ENCODE measurements at regions of chr1 and their contacts with region 1.

Region 1: DNA sequence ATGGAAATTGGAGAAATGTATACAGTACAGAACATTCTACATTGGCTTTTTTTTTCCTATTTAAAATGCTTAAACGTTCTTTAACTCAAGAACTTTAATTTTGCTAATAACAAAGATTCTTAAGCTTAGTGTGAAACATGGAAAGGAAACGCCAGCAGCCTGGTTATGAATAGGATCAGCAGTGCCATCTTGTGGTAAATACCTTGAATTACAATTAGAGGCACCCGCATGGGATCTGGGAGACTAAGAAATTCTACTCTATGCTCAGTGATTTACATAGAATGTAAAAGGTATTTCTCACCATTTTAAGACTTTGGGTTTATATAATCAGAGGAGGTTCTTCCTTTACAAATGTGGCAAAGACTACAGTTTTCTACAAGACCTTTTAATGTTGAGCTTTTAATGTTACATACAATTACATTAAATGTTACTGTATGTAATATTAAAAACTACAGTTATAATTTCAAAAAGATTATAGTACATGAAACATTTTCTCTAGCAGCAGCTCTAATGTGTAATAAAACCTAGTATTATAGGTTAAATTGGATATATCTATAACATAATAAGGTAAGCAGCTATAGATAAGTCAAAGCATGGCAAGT is 32.1 kb upstream of the APOBEC4 start:
- DNase-seq: peak; percentile 45
- ATAC-seq: peak; percentile 74
- H3K4me3 Mint-ChIP-seq: no peak overlapping the region
- H3K27ac Mint-ChIP-seq: no peak overlapping the region
- H3K4me1 Mint-ChIP-seq: peaks cover 10% of the 10 kb centered on the region
- H3K27me3 Mint-ChIP-seq: peaks cover 6% of the 10 kb centered on the region
- CTCF ChIP-seq: peak; percentile 78

Region 2: DNA sequence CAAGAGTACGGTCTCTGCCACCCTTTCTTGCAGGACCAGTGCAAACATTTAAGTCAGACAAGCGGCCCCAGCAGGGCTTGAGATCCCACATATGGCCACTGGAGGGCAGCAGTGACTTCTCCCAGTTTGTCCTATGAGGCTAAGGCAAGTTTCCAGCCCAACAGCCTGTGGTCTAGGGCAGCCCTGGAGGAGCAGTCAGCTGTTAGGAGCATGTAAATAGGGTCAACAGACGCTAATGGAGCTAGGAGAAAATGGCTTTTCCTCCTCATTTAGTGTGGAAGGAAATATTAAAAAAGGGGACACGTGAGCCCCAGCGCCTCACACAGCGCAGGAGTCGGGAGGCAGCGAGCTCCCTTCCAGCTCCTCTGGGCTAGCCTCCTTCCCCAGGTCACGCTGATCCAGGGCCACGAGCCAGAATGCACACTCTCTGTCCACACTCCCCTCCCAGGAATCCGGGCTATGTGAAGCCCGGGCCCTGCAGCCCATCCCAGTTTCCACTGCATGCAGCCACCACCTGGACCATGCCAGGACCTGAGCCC is 403.6 kb before region 1 on chr1:
- CTCF ChIA-PET with region 1: interaction called, 8 read pairs
- POLR2A ChIA-PET with region 1: no interaction called
- intact Hi-C with region 1: loop called (anchors 10 kb)
- DNase-seq: peak; percentile 87
- ATAC-seq: peak; percentile 89
- H3K4me3 Mint-ChIP-seq: no peak overlapping the region
- H3K27ac Mint-ChIP-seq: no peak overlapping the region
- H3K4me1 Mint-ChIP-seq: no peaks in the 10 kb centered on the region
- H3K27me3 Mint-ChIP-seq: peaks cover 8% of the 10 kb centered on the region
- CTCF ChIP-seq: peak; percentile 88

Region 3: GRCh38 chr1:183628537-183628936 is 56.7 kb before region 1 on chr1:
- CTCF ChIA-PET with region 1: interaction called, 14 read pairs
- POLR2A ChIA-PET with region 1: no interaction called
- intact Hi-C with region 1: no loop called
- DNase-seq: no peak
- ATAC-seq: peak; percentile 46
- H3K4me3 Mint-ChIP-seq: no peak overlapping the region
- H3K27ac Mint-ChIP-seq: peak overlapping the region; percentile 69
- H3K4me1 Mint-ChIP-seq: peaks cover 55% of the 10 kb centered on the region
- H3K27me3 Mint-ChIP-seq: no peaks in the 10 kb centered on the region
- CTCF ChIP-seq: no peak

Region 4: DNA sequence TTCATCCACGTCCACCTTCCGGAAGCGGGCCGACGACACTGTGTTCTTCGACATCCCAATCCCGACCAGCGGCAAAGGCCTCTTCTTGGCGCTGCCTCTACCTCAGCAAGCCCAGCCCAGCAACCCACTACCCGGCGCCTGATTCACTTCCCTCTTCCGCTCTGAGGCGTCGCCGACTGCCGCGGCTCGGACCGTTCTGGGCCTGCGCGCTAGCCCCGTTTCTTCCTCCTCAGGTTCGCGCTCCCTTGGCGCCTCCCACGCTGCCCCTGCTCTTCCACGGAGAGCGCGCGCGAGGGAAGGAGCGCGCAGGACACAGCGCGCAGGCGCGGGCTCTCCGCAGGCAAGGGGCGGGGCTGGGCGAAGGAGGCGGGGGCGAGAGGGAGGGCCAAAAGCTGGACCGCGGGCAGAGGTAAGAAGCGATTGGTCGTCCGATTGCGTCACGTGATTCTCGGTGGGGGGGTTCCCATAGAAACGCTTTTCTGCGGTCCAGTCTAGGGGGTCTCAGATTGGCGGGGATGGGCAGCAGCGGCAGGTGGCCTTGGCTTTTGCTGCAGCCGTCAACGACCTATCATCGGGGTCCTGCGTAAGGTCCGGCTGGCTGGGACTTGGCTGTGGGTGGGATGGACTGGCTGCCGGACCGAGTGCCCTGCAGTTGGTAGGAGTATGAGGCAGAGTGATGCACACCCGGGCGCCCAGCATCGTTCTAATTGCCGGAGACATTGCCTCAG is 49.4 kb before region 1 on chr1 and contains the start of gene ARPC5:
- CTCF ChIA-PET with region 1: interaction called, 13 read pairs
- POLR2A ChIA-PET with region 1: no interaction called
- intact Hi-C with region 1: no loop called
- DNase-seq: peak; percentile 95
- ATAC-seq: peak; percentile 89
- H3K4me3 Mint-ChIP-seq: peak within 1 kb of the TSS; percentile 89
- H3K27ac Mint-ChIP-seq: peak within 1 kb of the TSS; percentile 98
- H3K4me1 Mint-ChIP-seq: peaks cover 38% of the 10 kb centered on the region
- H3K27me3 Mint-ChIP-seq: no peaks in the 10 kb centered on the region
- CTCF ChIP-seq: no peak
- total RNA-seq, gene ARPC5: 128 to 134 TPM

Region 5: GRCh38 chr1:183670178-183670577 is 15.0 kb before region 1 on chr1:
- CTCF ChIA-PET with region 1: interaction called, 14 read pairs
- POLR2A ChIA-PET with region 1: no interaction called
- intact Hi-C with region 1: no loop called
- DNase-seq: no peak
- ATAC-seq: no peak
- H3K4me3 Mint-ChIP-seq: no peak overlapping the region
- H3K27ac Mint-ChIP-seq: no peak overlapping the region
- H3K4me1 Mint-ChIP-seq: no peaks in the 10 kb centered on the region
- H3K27me3 Mint-ChIP-seq: peaks cover 1% of the 10 kb centered on the region
- CTCF ChIP-seq: no peak

Region 6: DNA sequence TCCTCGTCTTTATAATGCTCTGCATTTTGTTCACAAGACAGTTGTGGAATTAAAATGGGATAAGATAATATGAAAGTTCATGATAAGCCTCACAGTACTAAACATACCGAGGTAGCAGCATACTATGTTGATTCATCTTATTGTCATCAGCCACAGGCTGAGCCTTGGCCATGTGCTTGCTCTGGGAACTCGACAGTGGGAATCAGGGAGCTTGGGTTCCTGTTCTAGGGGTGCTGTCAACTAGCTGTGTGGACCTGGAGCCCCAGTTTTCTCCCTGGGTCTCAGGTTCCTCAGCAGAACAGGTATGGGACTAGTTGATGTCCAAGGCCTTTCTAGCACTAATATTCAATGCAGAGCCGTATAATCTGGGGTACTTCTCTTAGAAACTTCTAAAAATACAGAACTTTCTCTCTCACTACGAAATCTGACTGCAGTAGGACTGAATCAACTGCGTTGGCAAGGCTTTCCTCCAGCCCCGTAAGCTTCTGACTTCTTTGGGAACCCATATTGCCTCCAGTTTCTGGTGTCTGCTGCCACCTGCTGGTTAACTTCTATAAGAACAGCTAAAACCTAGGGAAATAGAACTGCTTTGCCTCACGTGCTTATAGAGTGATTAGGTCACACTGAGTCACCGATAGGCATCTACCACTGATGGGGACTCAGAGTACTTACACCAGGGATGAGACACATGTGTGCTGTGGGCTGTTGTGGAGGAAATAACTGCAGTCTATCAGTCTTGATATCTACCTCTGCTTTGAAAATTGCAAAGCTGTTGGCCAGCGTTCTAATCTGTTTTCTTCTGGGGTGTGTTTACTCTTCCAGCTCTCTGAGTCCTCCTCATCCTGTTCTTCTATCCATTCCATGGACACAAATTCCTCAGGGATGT is 230.7 kb after region 1 on chr1:
- CTCF ChIA-PET with region 1: interaction called, 36 read pairs
- POLR2A ChIA-PET with region 1: interaction called, 3 read pairs
- intact Hi-C with region 1: no loop called
- DNase-seq: peak; percentile 79
- ATAC-seq: peak; percentile 99
- H3K4me3 Mint-ChIP-seq: no peak overlapping the region
- H3K27ac Mint-ChIP-seq: no peak overlapping the region
- H3K4me1 Mint-ChIP-seq: peaks cover 24% of the 10 kb centered on the region
- H3K27me3 Mint-ChIP-seq: no peaks in the 10 kb centered on the region
- CTCF ChIP-seq: peak; percentile 80